Naive thymus-derived CD4-positive, alpha-beta T cell (primary cell): ENCODE measurements at regions of chr22 and their contacts with region 1.

Region 1: GRCh38 chr22:23970816-23971486 is 3.3 kb downstream of the DDT start:
- DNase-seq: no peak
- ATAC-seq: no peak
- H3K4me3 ChIP-seq: no peak overlapping the region
- H3K4me3 Mint-ChIP-seq: peak overlapping the region in 7 of 10 donors; percentile 3 to 72 (median 38)
- H3K27ac ChIP-seq: no peak overlapping the region
- H3K27ac Mint-ChIP-seq: peak overlapping the region in 3 of 9 donors; percentile 1 to 46 (median 8)
- H3K4me1 ChIP-seq: no peaks in the 10 kb centered on the region
- H3K4me1 Mint-ChIP-seq: peaks cover 13 to 31% (median 26%) of the 10 kb centered on the region in 7 donors
- H3K27me3 ChIP-seq: no peaks in the 10 kb centered on the region
- H3K27me3 Mint-ChIP-seq: no peaks in the 10 kb centered on the region

Region 2: DNA sequence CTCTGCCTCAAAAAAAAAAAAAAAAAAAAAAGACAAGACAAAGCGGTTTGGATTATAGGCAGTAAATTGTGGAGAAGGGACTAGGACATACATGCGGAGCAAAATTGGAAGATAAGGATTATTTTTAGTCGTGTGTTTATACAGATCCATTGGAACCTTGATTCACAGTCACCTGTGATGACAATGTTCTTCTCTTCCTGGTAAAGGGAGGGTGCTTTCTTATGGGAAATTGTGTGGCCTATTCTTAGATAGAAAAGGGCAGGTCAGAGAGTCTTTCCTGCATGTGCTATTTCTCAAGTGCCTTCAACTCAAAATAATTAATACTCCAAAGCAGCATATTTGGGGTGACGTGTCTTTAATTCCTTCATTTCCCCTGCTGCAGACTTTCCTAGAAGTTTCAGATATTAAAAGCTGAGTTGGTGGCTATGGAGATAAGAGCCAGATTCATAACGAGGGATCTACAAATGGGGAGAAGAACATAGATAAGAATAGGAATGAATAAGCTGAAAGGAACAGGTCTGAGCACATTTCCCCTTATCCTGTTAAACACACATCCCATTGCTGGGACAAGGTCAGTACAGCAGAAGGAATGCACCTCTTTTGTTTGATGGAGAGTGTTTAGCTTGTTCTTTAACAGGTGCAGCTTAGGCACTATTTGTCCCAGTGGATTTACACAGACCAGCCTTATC is 32.5 kb before region 1 on chr22:
- CTCF ChIA-PET with region 1: no interaction called
- POLR2A ChIA-PET with region 1: no interaction called
- intact Hi-C with region 1: loop called in 1 of 2 experiments (anchors 5 kb)
- DNase-seq: no peak
- ATAC-seq: no peak
- H3K4me3 ChIP-seq: no peak overlapping the region
- H3K4me3 Mint-ChIP-seq: no peak overlapping the region
- H3K27ac ChIP-seq: no peak overlapping the region
- H3K27ac Mint-ChIP-seq: no peak overlapping the region
- H3K4me1 ChIP-seq: no peaks in the 10 kb centered on the region
- H3K4me1 Mint-ChIP-seq: peaks cover 0 to 3% (median 0%) of the 10 kb centered on the region in 7 donors
- H3K27me3 ChIP-seq: no peaks in the 10 kb centered on the region
- H3K27me3 Mint-ChIP-seq: peaks cover 0 to 13% (median 3%) of the 10 kb centered on the region in 5 donors